ENCODE measurements at regions of chr14 and their contacts with region 1.

Region 1: DNA sequence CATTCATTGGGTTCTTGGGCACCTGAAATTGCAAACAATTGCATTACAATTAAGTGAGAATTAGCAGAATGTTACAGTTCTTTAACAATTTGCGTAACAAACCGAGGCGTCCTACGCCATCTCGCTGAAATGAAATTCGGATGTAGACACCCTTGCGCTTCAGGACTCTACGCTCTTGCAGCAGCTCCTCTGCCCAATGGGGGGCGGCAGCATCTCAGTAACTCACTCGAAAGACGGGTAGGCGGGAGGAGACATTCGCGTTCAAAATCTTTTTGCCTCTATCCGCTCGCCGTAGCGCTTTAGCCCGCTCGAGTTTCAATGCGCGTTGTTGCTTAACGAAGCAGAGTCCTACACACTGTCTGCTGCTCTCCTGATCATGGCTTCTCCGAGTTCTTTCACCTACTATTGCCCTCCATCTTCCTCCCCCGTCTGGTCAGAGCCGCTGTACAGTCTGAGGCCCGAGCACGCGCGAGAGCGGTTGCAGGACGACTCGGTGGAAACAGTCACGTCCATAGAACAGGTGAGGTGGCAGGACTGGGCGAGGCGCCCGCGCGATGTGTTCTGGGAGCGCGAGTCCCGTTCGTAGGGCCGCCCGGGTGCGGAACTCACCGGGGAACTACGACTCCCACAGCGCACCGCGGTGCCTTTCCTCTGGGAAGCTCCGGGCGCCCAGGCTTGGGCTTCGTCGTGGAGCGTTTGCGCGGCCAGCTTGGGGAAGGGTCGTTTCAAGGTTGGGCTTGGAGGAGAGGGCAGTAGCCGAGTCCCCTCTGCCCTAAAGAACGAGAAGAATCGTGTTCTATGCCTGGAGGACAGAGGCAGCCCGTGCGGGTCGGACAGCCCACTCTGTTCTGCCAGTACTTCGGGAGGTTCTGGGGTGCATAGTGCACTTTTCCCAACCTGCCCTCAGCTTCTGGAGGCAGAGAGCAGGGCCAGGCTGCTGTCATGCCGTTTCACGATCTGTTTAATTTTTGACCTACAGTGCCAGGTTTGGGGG is at the start of gene FNTB:
- DNase-seq: peak; percentile 93 to 96
- H3K4me3 ChIP-seq: peak within 1 kb of the TSS; percentile 86
- H3K27ac ChIP-seq: peak within 1 kb of the TSS; percentile 77
- H3K4me1 ChIP-seq: peaks cover 21% of the 10 kb centered on the region
- H3K27me3 ChIP-seq: no peaks in the 10 kb centered on the region
- CTCF ChIP-seq: peak; percentile 61; the same call in 1 of the 2 replicates
- total RNA-seq, gene FNTB: 23.5 and 35.3 TPM in 2 replicates

Region 2: GRCh38 chr14:64126548-64126947 is 860.3 kb before region 1 on chr14:
- CTCF ChIA-PET with region 1: no interaction called
- POLR2A ChIA-PET with region 1: no interaction called
- intact Hi-C with region 1: no loop called
- DNase-seq: no peak
- H3K4me3 ChIP-seq: no peak overlapping the region
- H3K27ac ChIP-seq: no peak overlapping the region
- H3K4me1 ChIP-seq: no peaks in the 10 kb centered on the region
- H3K27me3 ChIP-seq: no peaks in the 10 kb centered on the region
- CTCF ChIP-seq: no peak

Region 3: DNA sequence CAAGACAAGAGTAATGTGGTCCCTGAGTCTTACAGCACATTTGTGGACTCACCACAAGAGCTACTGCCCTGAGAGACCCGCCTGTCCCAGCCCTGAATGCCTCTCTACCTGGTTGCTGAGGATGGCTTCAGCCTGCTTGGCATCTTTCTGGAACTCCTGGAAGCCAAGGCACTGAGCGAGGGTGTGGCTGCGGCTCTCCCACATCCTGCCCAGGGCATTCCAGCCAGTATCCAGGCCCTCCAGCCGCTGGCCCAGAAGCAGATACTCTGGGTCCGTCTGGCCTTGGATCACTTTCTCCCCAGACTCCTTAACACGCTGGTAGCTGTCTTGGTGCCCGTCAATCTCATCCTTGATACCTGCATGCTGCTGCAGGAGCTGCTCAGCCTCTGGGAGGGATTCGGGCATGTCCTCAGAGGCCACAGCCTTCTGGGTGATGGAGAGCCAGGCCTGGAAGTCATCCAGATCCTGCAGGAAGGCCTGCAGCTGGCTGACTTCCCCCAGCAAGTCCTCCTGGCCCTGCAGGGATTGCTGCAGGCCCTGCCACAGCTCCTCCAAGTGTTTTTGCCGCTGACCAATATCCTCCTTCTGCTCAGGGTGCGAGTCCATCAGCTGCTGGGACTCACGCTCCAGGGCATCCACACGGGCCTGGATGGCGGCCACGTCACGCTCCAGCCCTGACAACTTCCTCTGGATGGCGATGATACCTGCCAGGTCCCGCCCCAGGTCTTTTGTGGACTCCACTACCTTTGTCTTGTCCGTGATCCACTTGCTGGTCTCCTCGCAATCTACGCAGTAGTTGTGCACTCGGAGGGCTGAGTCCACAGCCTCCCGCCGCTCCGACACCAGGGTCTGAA is 200.4 kb before region 1 on chr14:
- CTCF ChIA-PET with region 1: no interaction called
- POLR2A ChIA-PET with region 1: no interaction called
- intact Hi-C with region 1: no loop called
- DNase-seq: no peak
- H3K4me3 ChIP-seq: no peak overlapping the region
- H3K27ac ChIP-seq: no peak overlapping the region
- H3K4me1 ChIP-seq: peaks cover 16% of the 10 kb centered on the region
- H3K27me3 ChIP-seq: 0 out of 2 replicates have a peak, but pooled peaks cover 4% of the 10 kb centered on the region
- CTCF ChIP-seq: no peak

Region 4: GRCh38 chr14:64891839-64892375 is 95.0 kb before region 1 on chr14:
- CTCF ChIA-PET with region 1: no interaction called
- POLR2A ChIA-PET with region 1: no interaction called
- intact Hi-C with region 1: loop called (anchors 5 kb)
- DNase-seq: peak; percentile 23 to 63
- H3K4me3 ChIP-seq: no peak overlapping the region
- H3K27ac ChIP-seq: no peak overlapping the region
- H3K4me1 ChIP-seq: no peaks in the 10 kb centered on the region
- H3K27me3 ChIP-seq: no peaks in the 10 kb centered on the region
- CTCF ChIP-seq: peak; percentile 89

Region 5: GRCh38 chr14:64937821-64938193 is 49.1 kb before region 1 on chr14:
- CTCF ChIA-PET with region 1: interaction called, 11 read pairs
- POLR2A ChIA-PET with region 1: no interaction called
- intact Hi-C with region 1: loop called (anchors 1 kb)
- DNase-seq: peak in 1 of 2 experiments; percentile 42
- H3K4me3 ChIP-seq: no peak overlapping the region
- H3K27ac ChIP-seq: peak overlapping the region; percentile 4; the same call in 1 of the 2 replicates
- H3K4me1 ChIP-seq: peaks cover 26% of the 10 kb centered on the region
- H3K27me3 ChIP-seq: no peaks in the 10 kb centered on the region
- CTCF ChIP-seq: peak; percentile 63

Region 6: DNA sequence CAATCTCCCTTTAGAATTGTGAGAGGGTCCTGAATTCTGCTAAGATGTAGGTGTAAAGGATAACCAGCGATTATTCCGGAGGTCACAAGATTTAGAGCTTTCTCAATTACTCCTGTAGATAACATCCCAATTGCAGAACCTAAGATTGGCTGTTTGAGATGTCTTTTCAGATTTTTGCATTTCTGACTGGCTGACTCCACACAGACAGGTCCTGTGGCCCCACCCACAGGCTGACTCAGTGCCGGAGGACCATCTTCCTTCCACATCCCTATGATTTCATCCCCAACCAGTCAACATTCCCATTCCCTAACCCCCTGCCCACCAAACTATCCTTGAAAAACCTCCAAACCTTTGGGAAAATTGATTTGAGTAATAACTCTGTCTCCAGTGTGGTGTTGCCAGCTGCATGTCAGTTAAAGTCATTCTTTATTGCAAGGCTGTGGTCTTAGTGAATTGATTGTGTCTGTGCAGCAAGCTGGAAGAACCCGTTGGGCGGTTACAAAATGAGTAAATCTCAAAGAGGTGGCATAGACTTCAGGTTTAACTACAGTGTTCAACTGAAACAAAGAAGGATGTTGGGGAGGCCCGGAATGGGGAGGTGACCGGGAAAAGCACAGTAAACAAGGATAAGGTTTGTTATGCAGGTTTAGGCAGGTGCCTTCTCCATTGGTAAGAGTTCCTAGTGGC is 10.4 kb after region 1 on chr14:
- CTCF ChIA-PET with region 1: interaction called, 11 read pairs
- POLR2A ChIA-PET with region 1: interaction called, 5 read pairs
- intact Hi-C with region 1: loop called (anchors 1 kb)
- DNase-seq: peak; percentile 74 to 94
- H3K4me3 ChIP-seq: peak overlapping the region; percentile 31; the same call in 1 of the 2 replicates
- H3K27ac ChIP-seq: peak overlapping the region; percentile 98
- H3K4me1 ChIP-seq: peaks cover 46% of the 10 kb centered on the region
- H3K27me3 ChIP-seq: no peaks in the 10 kb centered on the region
- CTCF ChIP-seq: no peak

Measured in PC-9 (cell line).